ENCODE measurements at regions of chr17 and their contacts with region 1.

Region 1: GRCh38 chr17:69567130-69567529 is 152.6 kb downstream of the MAP2K6 start:
- DNase-seq: no peak
- ATAC-seq: no peak

Region 2: DNA sequence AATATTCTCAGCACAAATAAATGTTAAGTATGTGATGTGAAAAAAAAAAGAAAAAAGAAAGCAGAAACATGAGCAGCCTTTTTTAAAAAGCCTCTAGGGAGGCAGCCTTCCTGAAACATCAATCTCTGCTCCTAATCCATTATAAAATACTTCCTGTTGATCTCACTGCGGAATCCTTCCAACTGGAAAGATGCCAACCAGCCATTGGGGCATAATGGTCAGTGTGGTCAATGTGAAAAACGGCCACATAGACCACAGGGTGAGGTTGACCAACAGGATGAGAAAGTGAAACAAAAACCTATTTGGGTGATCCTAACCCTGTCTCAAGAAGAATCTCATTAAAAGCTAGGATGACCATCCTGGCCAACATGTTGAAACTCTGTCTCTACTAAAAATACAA is 585.8 kb before region 1 on chr17:
- intact Hi-C with region 1: no loop called
- DNase-seq: peak; percentile 87
- ATAC-seq: peak; percentile 95

Region 3: DNA sequence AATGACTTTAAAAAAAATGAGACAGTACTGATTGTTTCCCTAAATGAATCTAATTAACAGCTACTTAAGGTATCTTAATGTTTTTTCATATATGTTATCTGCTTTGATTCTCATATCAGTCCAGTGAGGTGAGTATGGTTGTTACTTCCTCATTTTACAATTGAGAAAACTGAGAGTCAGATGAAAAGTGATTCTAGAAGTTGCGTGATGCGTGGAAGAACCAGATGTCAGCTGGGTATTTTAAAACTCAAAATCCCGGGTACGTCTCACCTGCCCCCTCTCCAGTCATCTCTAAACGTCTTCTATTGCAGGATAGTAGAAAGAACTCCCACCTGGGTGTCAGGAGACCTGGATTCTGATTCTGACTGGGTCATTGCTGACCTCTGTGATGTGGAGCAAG is 63.4 kb before region 1 on chr17:
- intact Hi-C with region 1: loop called (anchors 2 kb)
- DNase-seq: no peak
- ATAC-seq: no peak

Region 4: GRCh38 chr17:69523244-69523861 is 43.8 kb before region 1 on chr17:
- intact Hi-C with region 1: no loop called
- DNase-seq: no peak
- ATAC-seq: peak; percentile 86